ENCODE measurements at regions of chr2 and their contacts with region 1.

Region 1: DNA sequence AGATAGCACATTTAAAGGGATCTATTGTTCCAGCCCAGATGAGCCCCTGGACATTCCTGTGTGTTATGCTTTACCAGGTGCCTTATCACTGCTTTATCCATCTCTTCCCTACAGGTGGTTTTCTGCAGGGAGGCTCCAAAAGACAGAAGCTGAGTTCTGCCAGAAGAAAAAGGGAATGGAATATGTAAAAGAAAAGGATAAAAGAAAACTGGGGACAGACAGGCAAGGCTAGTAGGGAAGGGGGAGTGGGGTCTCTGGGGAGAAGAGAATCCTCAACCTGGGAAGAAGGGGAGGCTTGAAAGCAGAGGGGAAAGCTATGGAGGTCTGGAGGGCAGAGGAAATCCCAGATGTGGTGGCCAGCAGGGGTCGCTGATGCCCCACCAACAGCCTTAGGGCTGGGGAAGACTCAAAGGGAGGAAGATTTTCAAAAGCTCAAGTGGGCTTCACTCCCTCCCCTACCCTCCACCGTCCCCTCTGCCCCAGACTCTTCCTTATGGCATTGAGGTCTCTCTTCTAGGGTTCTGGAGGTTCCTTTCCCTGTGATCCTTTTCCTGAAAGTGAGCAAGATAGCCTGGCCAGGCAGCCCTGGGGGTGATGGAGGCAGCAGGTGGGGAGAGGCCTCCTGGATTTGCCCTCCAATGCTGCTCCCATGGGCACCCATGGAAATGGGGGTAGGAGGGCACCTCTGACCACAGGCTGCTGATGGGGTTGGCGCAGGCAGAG is 178.1 kb upstream of the PKDCC start:
- DNase-seq: peak; percentile 51 to 85 (median 67)
- ATAC-seq: peak; percentile 78
- H3K4me3 ChIP-seq: no peak overlapping the region
- H3K4me3 Mint-ChIP-seq: no peak overlapping the region
- H3K27ac ChIP-seq: no peak overlapping the region
- H3K27ac Mint-ChIP-seq: no peak overlapping the region
- H3K4me1 ChIP-seq: peaks cover 34% of the 10 kb centered on the region
- H3K4me1 Mint-ChIP-seq: peaks cover 11% of the 10 kb centered on the region
- H3K27me3 ChIP-seq: no peaks in the 10 kb centered on the region
- H3K27me3 Mint-ChIP-seq: peaks cover 11% of the 10 kb centered on the region
- CTCF ChIP-seq: peak; percentile 83

Region 2: GRCh38 chr2:42021464-42021863 is 151.8 kb after region 1 on chr2:
- CTCF ChIA-PET with region 1: no interaction called
- POLR2A ChIA-PET with region 1: no interaction called
- intact Hi-C with region 1: no loop called
- DNase-seq: no peak
- ATAC-seq: no peak
- H3K4me3 ChIP-seq: no peak overlapping the region
- H3K4me3 Mint-ChIP-seq: no peak overlapping the region
- H3K27ac ChIP-seq: no peak overlapping the region
- H3K27ac Mint-ChIP-seq: no peak overlapping the region
- H3K4me1 ChIP-seq: no peaks in the 10 kb centered on the region
- H3K4me1 Mint-ChIP-seq: no peaks in the 10 kb centered on the region
- H3K27me3 ChIP-seq: peaks cover 3 to 6% of the 10 kb centered on the region in 2 experiments
- H3K27me3 Mint-ChIP-seq: peaks cover 8% of the 10 kb centered on the region
- CTCF ChIP-seq: no peak

Region 3: DNA sequence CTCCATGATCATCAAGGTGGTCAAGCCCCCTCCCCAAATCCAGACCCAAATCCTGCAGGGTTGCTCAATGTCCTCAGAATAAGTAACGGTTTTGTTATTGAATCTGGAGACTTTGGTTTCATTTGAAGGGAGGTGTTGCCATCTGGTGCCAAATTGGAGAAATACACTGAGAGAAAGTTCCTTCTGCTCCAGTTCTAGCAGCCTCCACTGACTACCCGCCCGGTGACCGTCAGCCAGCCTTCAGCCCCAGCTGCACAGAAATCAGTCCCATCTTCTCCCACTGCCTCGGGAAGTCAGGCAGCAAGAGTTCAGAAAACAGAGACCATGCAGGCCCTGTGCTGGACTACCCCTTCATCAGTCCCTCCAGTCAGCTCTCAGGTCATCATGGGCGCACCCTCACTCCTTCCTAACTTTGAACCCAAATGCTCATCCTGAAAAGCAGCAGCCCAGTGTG is 216.8 kb after region 1 on chr2:
- CTCF ChIA-PET with region 1: interaction called, 25 read pairs
- POLR2A ChIA-PET with region 1: interaction called, 4 read pairs
- intact Hi-C with region 1: loop called (anchors 1 kb)
- DNase-seq: peak in 5 of 14 experiments; percentile 19 to 77 (median 63)
- ATAC-seq: peak; percentile 69
- H3K4me3 ChIP-seq: no peak overlapping the region
- H3K4me3 Mint-ChIP-seq: no peak overlapping the region
- H3K27ac ChIP-seq: no peak overlapping the region
- H3K27ac Mint-ChIP-seq: no peak overlapping the region
- H3K4me1 ChIP-seq: peaks cover 8% of the 10 kb centered on the region
- H3K4me1 Mint-ChIP-seq: peaks cover 4% of the 10 kb centered on the region
- H3K27me3 ChIP-seq: no peaks in the 10 kb centered on the region
- H3K27me3 Mint-ChIP-seq: peaks cover 8% of the 10 kb centered on the region
- CTCF ChIP-seq: peak; percentile 77

Region 4: GRCh38 chr2:42238644-42239288 is 369.1 kb after region 1 on chr2:
- CTCF ChIA-PET with region 1: no interaction called
- POLR2A ChIA-PET with region 1: no interaction called
- intact Hi-C with region 1: loop called in 1 of 2 experiments (anchors 5 kb)
- DNase-seq: peak in 13 of 14 experiments; percentile 12 to 71 (median 27)
- ATAC-seq: peak; percentile 79
- H3K4me3 ChIP-seq: no peak overlapping the region
- H3K4me3 Mint-ChIP-seq: no peak overlapping the region
- H3K27ac ChIP-seq: no peak overlapping the region
- H3K27ac Mint-ChIP-seq: no peak overlapping the region
- H3K4me1 ChIP-seq: peaks cover 29% of the 10 kb centered on the region
- H3K4me1 Mint-ChIP-seq: peaks cover 95% of the 10 kb centered on the region
- H3K27me3 ChIP-seq: no peaks in the 10 kb centered on the region
- H3K27me3 Mint-ChIP-seq: no peaks in the 10 kb centered on the region
- CTCF ChIP-seq: peak; percentile 52

Region 5: GRCh38 chr2:42317486-42317885 is 447.8 kb after region 1 on chr2:
- CTCF ChIA-PET with region 1: no interaction called
- POLR2A ChIA-PET with region 1: no interaction called
- intact Hi-C with region 1: no loop called
- DNase-seq: peak in 1 of 14 experiments; percentile 44
- ATAC-seq: peak; percentile 50
- H3K4me3 ChIP-seq: no peak overlapping the region
- H3K4me3 Mint-ChIP-seq: no peak overlapping the region
- H3K27ac ChIP-seq: peak overlapping the region in 1 of 2 donors; percentile 38
- H3K27ac Mint-ChIP-seq: peak overlapping the region; percentile 81
- H3K4me1 ChIP-seq: peaks cover 8% of the 10 kb centered on the region
- H3K4me1 Mint-ChIP-seq: peaks cover 54% of the 10 kb centered on the region
- H3K27me3 ChIP-seq: no peaks in the 10 kb centered on the region
- H3K27me3 Mint-ChIP-seq: no peaks in the 10 kb centered on the region
- CTCF ChIP-seq: no peak

Region 6: DNA sequence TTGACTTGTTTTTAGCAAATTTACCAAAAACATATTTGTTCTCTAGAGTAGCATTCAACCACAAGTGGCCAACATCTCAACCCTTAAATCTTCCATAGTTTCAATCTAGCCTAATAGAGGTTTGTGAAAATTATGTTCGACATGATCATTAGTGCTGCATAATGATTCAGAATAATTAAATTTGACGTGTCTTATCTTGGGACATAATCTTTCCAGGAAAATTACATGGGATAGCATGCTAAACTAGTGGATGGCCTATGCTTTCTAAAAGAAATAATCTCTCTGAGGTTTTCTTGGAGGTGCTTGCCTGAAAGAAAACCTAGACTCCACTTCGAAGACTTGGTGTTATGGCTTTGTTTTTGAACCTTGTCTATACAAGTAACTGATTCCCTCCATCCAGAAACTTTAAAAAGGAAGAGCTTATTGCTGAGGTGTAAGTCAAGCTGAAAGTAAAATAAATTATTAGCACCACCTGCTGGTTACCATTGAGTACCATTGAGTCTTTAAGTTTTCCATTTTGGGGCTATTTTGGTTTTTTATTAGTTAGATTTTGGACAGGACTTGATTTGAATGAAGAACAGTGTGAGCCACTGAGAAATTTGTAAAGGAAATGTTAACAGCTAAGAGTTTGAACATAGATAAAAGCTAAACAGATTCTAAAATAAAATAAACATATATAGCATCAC is 458.6 kb after region 1 on chr2:
- CTCF ChIA-PET with region 1: no interaction called
- POLR2A ChIA-PET with region 1: no interaction called
- intact Hi-C with region 1: loop called (anchors 1 to 5 kb)
- DNase-seq: peak in 3 of 14 experiments; percentile 44 to 56 (median 46)
- ATAC-seq: peak; percentile 52
- H3K4me3 ChIP-seq: no peak overlapping the region
- H3K4me3 Mint-ChIP-seq: no peak overlapping the region
- H3K27ac ChIP-seq: no peak overlapping the region
- H3K27ac Mint-ChIP-seq: peak overlapping the region; percentile 54
- H3K4me1 ChIP-seq: no peaks in the 10 kb centered on the region
- H3K4me1 Mint-ChIP-seq: peaks cover 4% of the 10 kb centered on the region
- H3K27me3 ChIP-seq: no peaks in the 10 kb centered on the region
- H3K27me3 Mint-ChIP-seq: no peaks in the 10 kb centered on the region
- CTCF ChIP-seq: peak; percentile 51

Region 7: DNA sequence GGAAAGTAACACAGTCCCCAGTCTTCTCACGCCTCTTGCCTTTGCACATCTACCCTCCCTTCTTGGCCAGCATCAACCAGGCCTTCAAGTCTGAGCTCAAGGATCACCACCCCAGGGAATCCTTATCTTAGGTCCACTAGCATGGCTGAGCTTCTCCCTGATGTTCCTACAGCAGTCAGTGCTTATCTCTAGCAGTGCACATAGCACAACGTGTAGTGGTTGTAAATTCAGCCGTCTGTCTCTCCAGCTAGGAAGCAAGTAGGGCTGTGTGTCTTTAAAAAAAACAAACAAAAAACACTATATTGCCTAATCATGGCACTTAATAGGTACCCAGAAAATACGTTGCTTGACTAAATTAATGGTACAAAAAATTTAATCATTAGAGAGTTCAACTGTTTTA is 594.9 kb after region 1 on chr2:
- CTCF ChIA-PET with region 1: no interaction called
- POLR2A ChIA-PET with region 1: no interaction called
- intact Hi-C with region 1: no loop called
- DNase-seq: no peak
- ATAC-seq: no peak
- H3K4me3 ChIP-seq: no peak overlapping the region
- H3K4me3 Mint-ChIP-seq: no peak overlapping the region
- H3K27ac ChIP-seq: no peak overlapping the region
- H3K27ac Mint-ChIP-seq: no peak overlapping the region
- H3K4me1 ChIP-seq: no peaks in the 10 kb centered on the region
- H3K4me1 Mint-ChIP-seq: no peaks in the 10 kb centered on the region
- H3K27me3 ChIP-seq: no peaks in the 10 kb centered on the region
- H3K27me3 Mint-ChIP-seq: no peaks in the 10 kb centered on the region
- CTCF ChIP-seq: no peak

Measured in CD4-positive, alpha-beta T cell (primary cell).